Ovary (tissue), 10 donors: ENCODE measurements at regions of chr4 and their contacts with region 1.

Region 1: GRCh38 chr4:180669680-180670079 is 1573.5 kb upstream of the TENM3 start:
- DNase-seq: no peak
- H3K4me3 ChIP-seq: no peak overlapping the region
- H3K27ac ChIP-seq: no peak overlapping the region
- H3K4me1 ChIP-seq: no peaks in the 10 kb centered on the region
- H3K27me3 ChIP-seq: no peaks in the 10 kb centered on the region
- CTCF ChIP-seq: no peak
- EP300 ChIP-seq: no peak
- POLR2A ChIP-seq: no peak

Region 2: DNA sequence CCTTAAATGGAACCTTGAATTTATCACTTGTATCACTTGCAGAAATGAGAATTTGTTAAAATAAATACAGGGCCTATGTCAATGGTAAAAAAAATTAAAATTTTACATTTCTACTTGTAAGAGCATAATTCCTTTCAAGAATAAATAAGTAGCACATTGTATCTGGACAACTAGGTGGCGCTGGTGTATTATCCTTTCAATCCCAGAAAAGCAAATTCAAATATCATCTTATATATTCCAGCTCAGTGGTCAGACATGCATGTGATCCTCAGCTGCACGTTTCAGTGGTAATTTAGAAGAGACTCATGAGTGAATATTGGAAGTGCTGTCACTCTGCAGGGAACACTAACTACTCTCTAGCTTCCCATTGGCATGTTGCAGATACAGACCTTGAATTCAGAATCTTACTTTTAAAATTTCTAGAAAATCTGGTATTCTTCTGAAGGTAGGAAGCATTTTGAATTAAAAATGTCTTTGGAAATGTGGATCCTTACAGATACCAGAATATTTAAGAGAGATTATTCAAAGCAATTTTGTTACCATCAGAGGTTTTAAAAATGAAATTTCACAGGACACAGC is 158.8 kb after region 1 on chr4:
- intact Hi-C with region 1: no loop called
- DNase-seq: no peak
- H3K4me3 ChIP-seq: no peak overlapping the region
- H3K27ac ChIP-seq: no peak overlapping the region
- H3K4me1 ChIP-seq: no peaks in the 10 kb centered on the region
- H3K27me3 ChIP-seq: no peaks in the 10 kb centered on the region
- CTCF ChIP-seq: peak in 1 of 3 donors; percentile 15
- EP300 ChIP-seq: no peak
- POLR2A ChIP-seq: no peak

Region 3: DNA sequence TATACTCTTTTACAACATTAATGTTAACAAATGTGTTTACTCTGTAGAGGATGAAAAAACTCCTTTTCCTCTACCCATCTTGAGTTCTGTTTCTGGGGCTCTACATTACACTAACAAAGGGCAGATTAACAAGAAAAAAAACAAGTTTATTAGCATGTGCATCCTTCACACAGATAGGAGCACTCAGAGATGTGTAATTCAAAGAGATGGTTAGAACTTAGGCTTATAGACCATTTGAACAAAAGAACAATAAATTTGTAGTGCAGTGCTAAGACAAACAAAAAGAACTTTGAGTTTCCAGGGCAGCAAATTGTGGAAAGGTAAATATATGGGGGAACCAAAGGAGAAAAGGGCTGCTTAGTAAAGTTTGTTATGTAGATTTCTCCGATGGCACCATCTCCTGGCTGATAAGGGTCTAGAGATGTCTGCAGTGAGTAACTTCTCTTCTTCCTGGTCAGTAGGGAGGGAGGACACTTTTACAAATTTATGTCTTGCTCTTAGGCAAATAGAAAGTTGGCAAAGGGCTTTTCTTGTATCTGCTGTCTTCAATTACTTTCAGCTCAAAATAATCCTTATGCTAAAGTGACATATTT is 323.7 kb after region 1 on chr4:
- intact Hi-C with region 1: loop called in 1 of 4 experiments (anchors 10 kb)
- DNase-seq: no peak
- H3K4me3 ChIP-seq: no peak overlapping the region
- H3K27ac ChIP-seq: no peak overlapping the region
- H3K4me1 ChIP-seq: no peaks in the 10 kb centered on the region
- H3K27me3 ChIP-seq: no peaks in the 10 kb centered on the region
- CTCF ChIP-seq: no peak
- EP300 ChIP-seq: no peak
- POLR2A ChIP-seq: no peak